ENCODE measurements at regions of chrX and their contacts with region 1.

Region 1: DNA sequence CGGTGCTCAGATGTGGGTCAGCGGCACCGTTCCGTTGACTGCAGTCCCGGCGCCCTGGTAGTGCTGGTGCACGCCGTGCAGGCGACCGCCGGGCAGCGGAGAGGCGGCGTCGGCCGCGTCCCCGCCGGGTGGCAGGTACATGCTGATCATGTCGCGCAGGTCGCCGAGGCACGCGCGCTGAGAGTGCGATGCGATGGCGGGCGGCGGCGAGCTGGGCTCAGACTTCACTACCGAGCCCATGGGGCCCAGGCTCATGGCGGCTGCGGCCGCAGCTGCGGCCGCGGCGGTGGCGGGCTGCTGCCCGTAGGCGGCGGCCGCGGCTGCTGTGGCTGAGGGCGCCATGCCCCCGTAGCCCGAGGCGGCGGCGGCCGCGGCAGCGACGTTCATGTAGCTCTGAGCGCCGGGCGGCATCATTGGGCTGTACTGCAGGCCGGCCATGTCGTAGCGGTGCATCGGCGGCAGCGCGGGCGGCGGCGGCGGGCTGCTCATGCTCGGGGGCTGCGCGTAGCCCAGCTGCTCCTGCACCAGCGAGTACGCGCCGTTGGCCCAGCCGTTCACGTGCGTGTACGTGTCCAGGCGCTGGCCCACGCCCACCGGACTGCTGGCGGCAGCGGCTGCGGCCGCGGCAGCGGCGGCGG is 1.0 kb downstream of the SOX3 start:
- DNase-seq: peak in 1 of 10 donors; percentile 51
- H3K4me3 ChIP-seq: peak overlapping the region in 57 of 59 donors; percentile 14 to 66 (median 44)
- H3K27ac ChIP-seq: peak overlapping the region in 1 of 59 donors; percentile 47
- H3K27me3 ChIP-seq: peaks cover 0 to 99% (median 74%) of the 10 kb centered on the region in 45 donors
- CTCF ChIP-seq: peak in 9 of 56 donors; percentile 6 to 39 (median 18)

Region 2: GRCh38 chrX:140057001-140057411 is 446.8 kb before region 1 on chrX:
- intact Hi-C with region 1: loop called in 1 of 2 experiments (anchors 2 kb)
- DNase-seq: peak; percentile 45 to 88 (median 75)
- H3K4me3 ChIP-seq: no peak overlapping the region
- H3K27ac ChIP-seq: no peak overlapping the region
- H3K27me3 ChIP-seq: peaks cover 0 to 40% (median 5%) of the 10 kb centered on the region in 45 donors
- CTCF ChIP-seq: peak; percentile 46 to 93 (median 86)

Region 3: DNA sequence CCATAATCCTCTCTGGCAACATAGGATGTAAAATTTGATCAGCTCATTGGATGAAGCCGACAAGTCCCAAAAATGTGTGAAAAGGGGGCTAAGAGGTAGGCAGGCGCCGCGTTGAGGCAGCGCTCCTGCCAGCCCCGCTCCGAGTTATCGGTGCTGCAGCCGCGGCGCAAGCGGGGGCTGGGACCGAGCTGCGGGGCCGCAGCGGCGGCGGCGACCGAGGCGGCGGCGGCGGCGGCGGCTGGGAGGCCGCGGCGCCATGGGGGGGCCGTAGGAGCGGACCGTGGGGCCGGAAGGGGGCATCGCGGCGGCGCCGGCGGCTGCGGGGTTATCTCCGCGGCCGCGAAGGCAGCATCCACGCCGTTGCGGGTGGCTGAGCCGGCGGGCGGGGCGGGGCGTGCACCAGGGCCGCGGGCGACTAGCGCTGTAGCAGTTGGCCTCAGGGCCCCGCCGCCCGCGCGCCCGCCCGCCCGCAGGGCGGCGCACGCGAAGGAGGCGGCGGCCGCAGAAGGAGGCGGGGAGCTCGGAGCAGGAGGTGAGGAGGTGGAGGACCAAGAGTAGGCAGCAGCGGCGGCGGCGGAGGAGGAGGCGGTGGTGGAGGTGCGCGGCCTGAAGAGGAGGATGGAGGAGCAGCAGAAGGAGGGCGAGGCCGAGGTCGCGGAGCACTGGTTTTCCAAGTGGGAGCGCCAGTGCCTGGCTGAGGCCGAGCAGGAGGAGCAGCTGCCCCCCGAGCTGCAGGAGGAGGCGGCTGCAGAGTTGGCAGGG is 412.5 kb before region 1 on chrX:
- intact Hi-C with region 1: loop called in 1 of 2 experiments (anchors 10 kb)
- DNase-seq: peak in 8 of 10 donors; percentile 8 to 58 (median 32)
- H3K4me3 ChIP-seq: peak overlapping the region; percentile 31 to 70 (median 51)
- H3K27ac ChIP-seq: peak overlapping the region in 17 of 59 donors; percentile 11 to 78 (median 46)
- H3K27me3 ChIP-seq: peaks cover 0 to 61% (median 12%) of the 10 kb centered on the region in 45 donors
- CTCF ChIP-seq: peak in 6 of 56 donors; percentile 4 to 24 (median 14)

Region 4: GRCh38 chrX:140141444-140142029 is 362.3 kb before region 1 on chrX:
- intact Hi-C with region 1: loop called in 1 of 2 experiments (anchors 10 kb)
- DNase-seq: peak in 3 of 10 donors; percentile 11 to 45 (median 27)
- H3K4me3 ChIP-seq: no peak overlapping the region
- H3K27ac ChIP-seq: no peak overlapping the region
- H3K27me3 ChIP-seq: peaks cover 0 to 66% (median 19%) of the 10 kb centered on the region in 45 donors
- CTCF ChIP-seq: peak; percentile 34 to 84 (median 72)

Region 5: DNA sequence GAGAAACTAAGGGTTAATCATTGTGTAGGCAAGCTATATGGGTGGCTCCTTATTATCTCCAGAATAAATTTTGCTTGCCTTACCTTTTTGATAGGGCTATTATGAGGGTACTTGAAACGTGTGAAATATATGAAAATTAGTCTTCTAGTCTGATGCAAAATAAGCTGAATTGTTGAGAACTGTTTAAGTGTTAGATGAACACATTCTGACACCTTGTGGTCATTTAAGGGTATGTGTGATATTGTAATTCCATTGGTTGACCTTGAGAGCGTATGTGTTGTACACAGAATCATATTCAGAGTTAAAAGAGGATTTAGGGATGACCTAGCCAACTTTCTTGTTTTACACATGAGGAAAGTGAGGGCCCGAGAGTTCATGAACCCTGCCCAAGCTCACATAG is 161.1 kb after region 1 on chrX:
- intact Hi-C with region 1: loop called in 1 of 2 experiments (anchors 5 kb)
- DNase-seq: no peak
- H3K4me3 ChIP-seq: no peak overlapping the region
- H3K27ac ChIP-seq: no peak overlapping the region
- H3K27me3 ChIP-seq: peaks cover 0 to 43% (median 7%) of the 10 kb centered on the region in 45 donors
- CTCF ChIP-seq: peak in 53 of 56 donors; percentile 22 to 78 (median 54)